Natural killer cell (primary cell): ENCODE measurements at regions of chr7 and their contacts with region 1.

Region 1: DNA sequence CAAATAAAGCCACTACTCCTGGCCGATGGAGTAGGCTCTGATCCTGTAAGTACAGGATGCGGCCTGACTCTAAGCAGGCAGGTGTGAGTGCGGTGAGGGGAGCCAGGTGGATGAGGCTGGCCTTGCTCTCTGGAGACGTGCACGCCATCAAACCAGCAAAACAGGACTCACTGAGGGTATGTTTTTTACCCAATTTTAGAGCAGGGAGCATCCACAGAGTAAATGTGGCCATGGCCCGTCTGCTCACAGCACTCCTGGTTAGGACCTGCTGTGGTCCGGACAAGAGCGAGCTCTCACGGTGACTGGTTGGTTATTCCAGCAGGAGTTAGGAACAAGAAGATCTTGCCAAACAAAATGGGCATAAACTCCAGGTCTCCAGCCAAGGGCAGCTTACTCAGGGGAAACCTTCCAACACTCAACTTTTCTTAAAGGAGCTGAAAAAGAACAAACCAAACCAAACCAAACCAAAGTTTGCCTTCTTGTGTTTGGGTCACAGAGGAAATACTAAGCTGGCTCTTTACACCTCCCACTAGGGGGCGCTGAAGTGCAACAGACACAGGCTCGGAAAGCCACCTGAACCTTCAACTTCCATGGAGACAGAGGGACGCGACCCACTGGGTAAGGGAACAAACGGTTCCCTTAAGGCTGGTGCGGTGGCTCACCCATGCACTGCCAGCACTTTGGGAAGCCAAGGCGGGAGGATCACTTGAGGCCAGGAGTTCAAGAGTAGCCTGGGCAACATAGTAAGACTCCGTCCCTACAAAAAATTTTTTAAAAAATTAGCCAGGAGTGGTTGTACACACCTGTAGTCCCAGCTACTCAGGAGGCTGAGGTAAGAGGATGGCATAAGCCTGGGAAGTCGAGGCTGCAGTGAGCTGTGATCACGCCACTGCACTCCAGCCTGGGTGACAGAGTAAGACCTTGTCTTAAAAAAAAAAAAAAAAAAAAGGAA is 122.4 kb downstream of the CLEC2L start:
- DNase-seq: peak; percentile 83 to 93
- ATAC-seq: peak; percentile 33 to 57 (median 42)
- H3K4me3 ChIP-seq: no peak overlapping the region
- H3K4me3 Mint-ChIP-seq: peak overlapping the region; percentile 42
- H3K27ac ChIP-seq: no peak overlapping the region
- H3K27ac Mint-ChIP-seq: peak overlapping the region; percentile 94 to 97
- H3K4me1 ChIP-seq: peaks cover 44% of the 10 kb centered on the region
- H3K4me1 Mint-ChIP-seq: peaks cover 75 to 77% of the 10 kb centered on the region in 2 donors
- H3K27me3 ChIP-seq: no peaks in the 10 kb centered on the region
- H3K27me3 Mint-ChIP-seq: no peaks in the 10 kb centered on the region
- CTCF ChIP-seq: peak; percentile 88

Region 2: GRCh38 chr7:139680676-139681462 is 35.0 kb after region 1 on chr7:
- intact Hi-C with region 1: loop called (anchors 2 kb)
- DNase-seq: peak; percentile 49 to 59
- ATAC-seq: peak; percentile 88 to 91 (median 89)
- H3K4me3 ChIP-seq: no peak overlapping the region
- H3K4me3 Mint-ChIP-seq: peak overlapping the region; percentile 71
- H3K27ac ChIP-seq: peak overlapping the region; percentile 54
- H3K27ac Mint-ChIP-seq: peak overlapping the region; percentile 88 to 94
- H3K4me1 ChIP-seq: peaks cover 39% of the 10 kb centered on the region
- H3K4me1 Mint-ChIP-seq: peaks cover 63 to 80% of the 10 kb centered on the region in 2 donors
- H3K27me3 ChIP-seq: no peaks in the 10 kb centered on the region
- H3K27me3 Mint-ChIP-seq: no peaks in the 10 kb centered on the region
- CTCF ChIP-seq: no peak

Region 3: GRCh38 chr7:139777948-139778841 is 132.3 kb after region 1 on chr7 and contains the start of gene HIPK2:
- intact Hi-C with region 1: loop called (anchors 2 kb)
- DNase-seq: peak; percentile 63 to 81
- ATAC-seq: peak; percentile 68 to 80 (median 74)
- H3K4me3 ChIP-seq: peak within 1 kb of the TSS; percentile 78
- H3K4me3 Mint-ChIP-seq: peak within 1 kb of the TSS; percentile 98
- H3K27ac ChIP-seq: peak within 1 kb of the TSS; percentile 75
- H3K27ac Mint-ChIP-seq: peak within 1 kb of the TSS; percentile 95 to 99
- H3K4me1 ChIP-seq: peaks cover 21% of the 10 kb centered on the region
- H3K4me1 Mint-ChIP-seq: peaks cover 57 to 59% of the 10 kb centered on the region in 2 donors
- H3K27me3 ChIP-seq: peaks cover 4% of the 10 kb centered on the region
- H3K27me3 Mint-ChIP-seq: no peaks in the 10 kb centered on the region
- CTCF ChIP-seq: no peak
- total RNA-seq, gene HIPK2: 127 to 145 (median 144) TPM

Region 4: GRCh38 chr7:139875821-139876241 is 230.0 kb after region 1 on chr7:
- intact Hi-C with region 1: loop called (anchors 5 kb)
- DNase-seq: peak in 1 of 2 donors; percentile 56
- ATAC-seq: peak; percentile 66 to 80 (median 79)
- H3K4me3 ChIP-seq: no peak overlapping the region
- H3K4me3 Mint-ChIP-seq: peak overlapping the region; percentile 74
- H3K27ac ChIP-seq: peak overlapping the region; percentile 88
- H3K27ac Mint-ChIP-seq: peak overlapping the region; percentile 83
- H3K4me1 ChIP-seq: peaks cover 48% of the 10 kb centered on the region
- H3K4me1 Mint-ChIP-seq: peaks cover 73 to 81% of the 10 kb centered on the region in 2 donors
- H3K27me3 ChIP-seq: no peaks in the 10 kb centered on the region
- H3K27me3 Mint-ChIP-seq: no peaks in the 10 kb centered on the region
- CTCF ChIP-seq: no peak

Region 5: DNA sequence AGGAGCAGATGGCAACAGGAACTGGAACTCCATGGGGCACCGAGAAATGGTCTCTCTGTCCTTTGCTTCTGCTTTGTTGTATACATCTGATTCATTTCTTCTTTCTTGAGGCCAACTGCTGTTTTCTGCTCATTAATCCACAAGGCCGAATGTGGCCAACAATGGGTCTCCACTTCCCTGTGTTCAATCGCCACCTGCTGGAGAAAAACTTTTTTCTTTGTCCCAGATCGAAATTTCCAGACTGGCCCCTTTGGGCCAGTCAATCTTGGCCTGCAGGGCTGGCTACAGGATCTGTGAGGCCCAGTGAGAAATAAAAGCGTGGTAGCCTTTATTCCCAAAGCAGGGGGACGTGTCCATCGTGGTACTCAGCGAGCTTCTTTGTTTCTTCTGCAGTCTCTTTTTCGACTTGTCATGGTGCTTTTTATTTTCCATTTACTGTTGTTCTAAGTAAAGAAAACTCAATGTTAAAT is 358.1 kb after region 1 on chr7:
- intact Hi-C with region 1: loop called (anchors 1 kb)
- DNase-seq: peak in 1 of 2 donors; percentile 60
- ATAC-seq: peak in 2 of 3 donors; percentile 26 to 41
- H3K4me3 ChIP-seq: no peak overlapping the region
- H3K4me3 Mint-ChIP-seq: no peak overlapping the region
- H3K27ac ChIP-seq: no peak overlapping the region
- H3K27ac Mint-ChIP-seq: peak overlapping the region in 1 of 2 donors; percentile 24
- H3K4me1 ChIP-seq: no peaks in the 10 kb centered on the region
- H3K4me1 Mint-ChIP-seq: peaks cover 6% of the 10 kb centered on the region in 2 donors
- H3K27me3 ChIP-seq: no peaks in the 10 kb centered on the region
- H3K27me3 Mint-ChIP-seq: no peaks in the 10 kb centered on the region
- CTCF ChIP-seq: peak; percentile 61